Left colon (tissue), 2 donors: ENCODE measurements at regions of chr12 and their contacts with region 1.

Region 1: GRCh38 chr12:55935738-55936151 is 4.8 kb downstream of the DGKA start:
- DNase-seq: peak in 1 of 2 donors; percentile 39
- ATAC-seq: no peak

Region 2: GRCh38 chr12:55743116-55743921 is 192.4 kb before region 1 on chr12 and contains the start of gene GDF11:
- intact Hi-C with region 1: loop called in 1 of 2 experiments (anchors 5 kb)
- DNase-seq: peak; percentile 56 to 71
- ATAC-seq: peak; percentile 64
- total RNA-seq, gene GDF11: 1.5 to 2.7 TPM